Endothelial cell of umbilical vein (primary cell): ENCODE measurements at regions of chr19 and their contacts with region 1.

Region 1: DNA sequence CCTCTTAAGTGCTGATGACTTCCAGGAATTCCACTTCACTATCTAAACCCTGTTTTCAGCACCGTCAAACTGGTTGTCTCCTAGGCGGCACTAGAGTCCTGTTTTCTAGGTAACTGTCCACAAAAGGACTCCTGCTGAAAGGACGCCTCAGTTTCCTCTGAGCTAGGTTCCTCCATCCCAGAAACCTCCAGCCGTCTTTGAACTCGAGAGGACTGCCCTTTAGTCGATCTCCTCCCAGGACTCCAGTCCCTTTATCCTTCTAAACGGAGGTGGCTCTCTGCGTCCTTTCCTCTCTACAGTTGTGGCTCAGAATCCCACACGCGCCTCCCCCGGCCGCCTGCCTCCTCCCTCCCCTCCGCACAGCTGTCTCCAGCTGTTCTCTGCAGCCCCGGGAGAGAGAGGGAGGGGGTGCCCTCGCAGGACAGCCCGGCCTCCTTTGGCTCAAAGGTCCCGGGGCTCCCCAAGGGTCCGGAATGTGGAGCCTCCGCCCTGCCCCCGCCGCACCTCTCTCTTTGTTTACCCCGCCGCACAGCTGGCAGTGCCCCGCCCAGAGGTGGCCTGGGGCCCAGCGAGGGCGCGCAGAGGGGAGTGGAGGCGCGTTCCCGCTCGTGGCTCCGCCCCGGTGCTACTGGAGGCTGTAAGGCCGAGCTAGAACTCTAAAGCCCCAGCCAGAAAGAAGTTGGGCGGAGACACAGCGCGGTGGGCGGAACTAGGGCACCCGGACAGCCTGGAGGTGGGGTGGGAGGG is 2.4 kb downstream of the LTBP4 start:
- DNase-seq: peak; percentile 96
- H3K4me3 ChIP-seq: peak overlapping the region in 2 of 3 experiments; percentile 12 to 45
- H3K27ac ChIP-seq: no peak overlapping the region
- H3K4me1 ChIP-seq: peaks cover 45% of the 10 kb centered on the region
- H3K27me3 ChIP-seq: peaks cover 4 to 6% of the 10 kb centered on the region in 2 experiments
- CTCF ChIP-seq: no peak
- POLR2A ChIP-seq: no peak

Region 2: GRCh38 chr19:40322871-40323615 is 280.5 kb before region 1 on chr19:
- CTCF ChIA-PET with region 1: no interaction called
- POLR2A ChIA-PET with region 1: no interaction called
- dilution Hi-C with region 1: no loop called
- intact Hi-C with region 1: no loop called
- DNase-seq: no peak
- H3K4me3 ChIP-seq: no peak overlapping the region
- H3K27ac ChIP-seq: no peak overlapping the region
- H3K4me1 ChIP-seq: peaks cover 4% of the 10 kb centered on the region
- H3K27me3 ChIP-seq: no peaks in the 10 kb centered on the region
- CTCF ChIP-seq: no peak
- POLR2A ChIP-seq: no peak

Region 3: DNA sequence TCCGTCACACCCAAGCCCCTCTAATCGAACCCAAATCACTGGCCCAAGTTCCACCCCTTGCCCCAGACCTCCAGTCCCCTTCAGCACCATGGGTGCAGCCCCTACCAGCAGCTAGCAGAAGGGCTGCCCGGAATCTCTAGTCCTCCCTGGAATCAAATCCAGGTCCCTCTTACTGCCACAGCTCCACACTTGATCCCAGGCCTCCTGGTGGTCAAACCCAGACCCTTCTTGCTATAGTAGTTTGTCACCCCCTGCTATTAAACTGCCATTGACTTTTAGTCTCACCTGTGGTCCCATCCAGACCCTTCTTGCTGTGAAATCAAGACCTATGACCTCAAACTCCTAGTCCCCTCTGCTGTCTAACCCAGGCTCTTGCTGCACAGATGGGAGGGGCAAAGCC is 222.2 kb before region 1 on chr19:
- CTCF ChIA-PET with region 1: no interaction called
- POLR2A ChIA-PET with region 1: no interaction called
- dilution Hi-C with region 1: no loop called
- intact Hi-C with region 1: no loop called
- DNase-seq: no peak
- H3K4me3 ChIP-seq: no peak overlapping the region
- H3K27ac ChIP-seq: no peak overlapping the region
- H3K4me1 ChIP-seq: no peaks in the 10 kb centered on the region
- H3K27me3 ChIP-seq: no peaks in the 10 kb centered on the region
- CTCF ChIP-seq: peak in 1 of 2 donors; percentile 22
- POLR2A ChIP-seq: no peak

Region 4: DNA sequence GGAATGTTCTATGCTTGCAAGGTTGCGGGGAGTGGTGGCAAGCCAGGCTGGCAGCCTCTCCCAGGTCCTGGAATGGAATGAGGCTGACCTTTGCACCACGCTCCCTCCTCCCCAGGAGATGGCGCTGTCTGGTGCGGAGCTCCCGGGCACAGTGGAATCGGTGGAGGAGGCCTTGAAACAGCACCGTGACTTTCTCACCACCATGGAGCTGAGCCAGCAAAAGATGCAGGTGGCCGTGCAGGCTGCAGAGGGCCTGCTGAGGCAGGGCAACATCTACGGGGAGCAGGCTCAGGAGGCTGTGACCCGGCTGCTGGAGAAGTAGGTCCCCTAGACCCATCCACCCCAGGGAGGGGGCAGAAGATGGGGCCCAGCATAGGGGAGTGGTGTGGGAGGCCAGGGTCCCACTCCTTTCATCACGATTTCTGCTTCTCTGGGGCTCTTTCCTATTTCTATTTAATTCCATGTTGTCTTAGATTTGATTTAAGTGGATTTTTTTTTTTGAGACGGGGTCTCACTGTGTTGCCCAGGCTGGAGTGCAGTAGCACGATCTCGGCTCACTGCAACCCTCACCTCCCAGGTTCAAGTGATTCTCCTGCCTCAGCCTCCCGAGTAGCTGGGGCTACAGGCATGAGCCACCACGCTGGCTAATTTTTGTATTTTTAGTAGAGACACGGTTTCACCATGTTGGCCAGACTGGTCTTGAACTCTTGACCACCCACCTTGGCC is 80.1 kb before region 1 on chr19:
- CTCF ChIA-PET with region 1: interaction called, 17 read pairs
- POLR2A ChIA-PET with region 1: no interaction called
- dilution Hi-C with region 1: no loop called
- intact Hi-C with region 1: no loop called
- DNase-seq: peak; percentile 49
- H3K4me3 ChIP-seq: no peak overlapping the region
- H3K27ac ChIP-seq: no peak overlapping the region
- H3K4me1 ChIP-seq: no peaks in the 10 kb centered on the region
- H3K27me3 ChIP-seq: peaks cover 2 to 7% of the 10 kb centered on the region in 2 experiments
- CTCF ChIP-seq: peak; percentile 67 to 84
- POLR2A ChIP-seq: no peak

Region 5: GRCh38 chr19:40542202-40542859 is 61.2 kb before region 1 on chr19:
- CTCF ChIA-PET with region 1: interaction called, 37 read pairs
- POLR2A ChIA-PET with region 1: no interaction called
- dilution Hi-C with region 1: no loop called
- intact Hi-C with region 1: loop called (anchors 2 kb)
- DNase-seq: no peak
- H3K4me3 ChIP-seq: no peak overlapping the region
- H3K27ac ChIP-seq: no peak overlapping the region
- H3K4me1 ChIP-seq: no peaks in the 10 kb centered on the region
- H3K27me3 ChIP-seq: no peaks in the 10 kb centered on the region
- CTCF ChIP-seq: no peak
- POLR2A ChIP-seq: no peak

Region 6: GRCh38 chr19:40549007-40549708 is 54.4 kb before region 1 on chr19:
- CTCF ChIA-PET with region 1: interaction called, 50 read pairs
- POLR2A ChIA-PET with region 1: no interaction called
- dilution Hi-C with region 1: no loop called
- intact Hi-C with region 1: loop called (anchors 1 kb)
- DNase-seq: peak; percentile 42
- H3K4me3 ChIP-seq: no peak overlapping the region
- H3K27ac ChIP-seq: no peak overlapping the region
- H3K4me1 ChIP-seq: no peaks in the 10 kb centered on the region
- H3K27me3 ChIP-seq: peaks cover 14 to 16% of the 10 kb centered on the region in 2 experiments
- CTCF ChIP-seq: peak; percentile 7 to 67
- POLR2A ChIP-seq: no peak

Region 7: DNA sequence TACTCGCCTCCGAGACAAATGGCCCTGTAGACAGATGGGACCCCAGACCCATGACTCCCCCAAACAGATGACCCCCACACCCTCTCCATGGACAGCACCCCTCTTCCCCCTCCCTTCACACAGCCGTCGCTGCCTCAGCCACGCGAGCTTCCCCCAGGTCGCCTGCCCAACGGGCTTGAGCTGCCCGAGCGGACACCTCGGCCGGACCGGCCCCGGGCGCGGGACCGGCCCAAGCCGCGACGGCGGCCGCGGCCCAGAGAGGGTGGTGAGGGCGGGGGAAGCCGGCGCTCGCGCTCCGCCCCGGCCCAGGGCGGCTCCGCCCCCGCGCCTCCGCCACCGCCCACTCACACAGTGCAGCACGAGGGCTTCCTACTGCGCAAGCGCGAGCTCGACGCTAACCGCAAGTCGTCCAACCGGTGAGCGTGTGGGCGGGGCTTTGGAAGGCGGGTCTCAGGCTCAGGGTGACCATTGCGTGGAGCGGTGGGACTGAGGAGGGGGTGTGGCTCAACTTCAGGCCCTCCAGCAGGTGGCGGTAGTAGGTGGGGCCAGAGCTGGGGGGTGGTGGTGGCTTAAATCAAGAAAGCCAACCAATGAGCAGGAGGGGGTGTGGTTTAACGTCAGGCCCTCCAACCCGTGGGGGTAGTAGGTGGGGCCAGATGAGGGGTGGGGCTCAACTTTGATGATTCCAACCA is 33.1 kb before region 1 on chr19:
- CTCF ChIA-PET with region 1: interaction called, 16 read pairs
- POLR2A ChIA-PET with region 1: interaction called, 5 read pairs
- dilution Hi-C with region 1: no loop called
- intact Hi-C with region 1: no loop called
- DNase-seq: peak; percentile 99
- H3K4me3 ChIP-seq: peak overlapping the region in 1 of 3 experiments; percentile 32
- H3K27ac ChIP-seq: no peak overlapping the region
- H3K4me1 ChIP-seq: peaks cover 4% of the 10 kb centered on the region
- H3K27me3 ChIP-seq: peaks cover 22% of the 10 kb centered on the region in 2 experiments
- CTCF ChIP-seq: peak in 1 of 2 donors; percentile 36
- POLR2A ChIP-seq: no peak

Region 8: DNA sequence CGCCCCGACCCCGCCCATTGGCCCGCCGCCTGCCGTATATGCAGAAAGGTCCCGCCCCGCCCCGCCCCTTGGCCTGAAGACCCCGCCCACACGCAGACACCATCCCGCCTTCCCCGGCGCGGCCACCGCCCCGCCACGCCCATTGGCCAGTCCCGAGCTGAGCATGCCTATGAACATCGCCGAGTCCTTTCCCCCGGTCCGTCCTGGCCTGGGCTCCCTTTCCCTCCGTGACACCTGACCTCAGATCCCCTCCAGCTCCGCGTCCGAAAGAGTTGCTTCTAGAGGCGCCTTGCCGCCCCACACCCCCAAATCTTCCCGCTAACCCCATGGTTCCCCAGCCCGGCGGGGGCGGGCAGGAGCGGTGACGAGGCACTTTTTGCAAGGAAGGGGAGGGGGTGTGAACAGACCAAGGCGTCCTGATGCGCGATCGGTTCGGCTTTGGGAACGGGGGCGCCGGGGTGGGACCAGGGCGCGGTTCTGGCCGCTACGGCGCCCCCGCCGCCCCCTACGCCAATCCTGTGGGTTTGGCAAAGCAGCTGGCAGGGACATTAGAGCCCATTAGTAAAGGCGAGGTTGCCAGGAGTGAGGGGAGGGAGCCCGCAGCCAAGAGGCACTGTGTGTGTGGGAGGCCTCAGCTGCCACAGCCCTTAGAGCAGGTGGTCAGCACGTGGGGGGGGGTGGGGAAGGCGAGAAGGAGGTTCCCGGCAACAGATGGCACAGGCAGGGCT is 87.3 kb after region 1 on chr19:
- CTCF ChIA-PET with region 1: no interaction called
- POLR2A ChIA-PET with region 1: no interaction called
- dilution Hi-C with region 1: no loop called
- intact Hi-C with region 1: no loop called
- DNase-seq: peak; percentile 91
- H3K4me3 ChIP-seq: peak overlapping the region; percentile 42 to 73 (median 62)
- H3K27ac ChIP-seq: peak overlapping the region; percentile 91
- H3K4me1 ChIP-seq: peaks cover 13% of the 10 kb centered on the region
- H3K27me3 ChIP-seq: no peaks in the 10 kb centered on the region
- CTCF ChIP-seq: no peak
- POLR2A ChIP-seq: peak; percentile 36